ENCODE measurements at regions of chr9 and their contacts with region 1.

Region 1: GRCh38 chr9:114397848-114398605 is 10.2 kb upstream of the AKNA start:
- DNase-seq: peak; percentile 97
- H3K4me3 Mint-ChIP-seq: peak overlapping the region; percentile 95
- H3K27ac Mint-ChIP-seq: peak overlapping the region; percentile 90
- H3K4me1 Mint-ChIP-seq: peaks cover 44% of the 10 kb centered on the region
- H3K27me3 Mint-ChIP-seq: no peaks in the 10 kb centered on the region

Region 2: DNA sequence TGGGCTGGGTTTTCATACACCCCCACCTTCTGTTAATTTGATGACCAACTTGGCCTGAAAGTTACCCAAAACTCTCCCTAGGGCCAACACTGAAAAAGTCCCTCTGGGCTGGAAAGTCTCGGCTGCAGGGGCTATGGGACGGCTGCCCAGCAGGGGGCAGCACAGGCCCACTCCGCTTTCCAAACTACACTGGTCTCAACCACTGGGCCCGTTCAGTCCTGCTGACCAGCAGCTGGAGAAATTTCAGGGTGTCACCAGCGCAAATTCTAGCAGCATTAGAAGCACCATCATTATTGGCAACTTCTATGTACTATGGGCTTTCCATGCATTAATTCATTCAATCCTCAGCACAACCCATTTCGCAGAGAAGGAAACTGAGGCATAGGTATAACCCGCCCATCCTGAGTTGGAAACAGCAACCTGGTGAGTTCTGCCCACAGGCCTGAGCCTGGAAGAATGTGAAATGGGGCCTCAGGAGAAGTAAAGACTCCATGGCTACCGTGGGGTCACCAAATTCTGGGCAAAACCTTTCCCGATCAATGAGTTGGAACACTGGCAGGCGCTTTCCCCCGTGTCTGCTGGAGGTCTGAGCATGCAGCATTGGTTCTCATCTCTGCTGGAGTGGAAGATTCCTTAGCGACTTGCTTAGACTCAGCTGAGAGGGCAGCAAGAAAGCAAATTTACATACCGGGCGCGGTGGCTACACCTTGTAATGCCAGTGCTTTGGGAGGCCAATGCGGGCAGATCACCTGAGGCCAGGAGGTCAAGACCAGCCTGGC is 58.7 kb before region 1 on chr9:
- CTCF ChIA-PET with region 1: interaction called, 7 read pairs
- POLR2A ChIA-PET with region 1: no interaction called
- intact Hi-C with region 1: loop called (anchors 1 kb)
- DNase-seq: peak; percentile 71
- H3K4me3 Mint-ChIP-seq: no peak overlapping the region
- H3K27ac Mint-ChIP-seq: peak overlapping the region; percentile 64
- H3K4me1 Mint-ChIP-seq: peaks cover 3% of the 10 kb centered on the region
- H3K27me3 Mint-ChIP-seq: no peaks in the 10 kb centered on the region

Region 3: GRCh38 chr9:114348906-114349482 is 49.0 kb before region 1 on chr9:
- CTCF ChIA-PET with region 1: interaction called, 3 read pairs
- POLR2A ChIA-PET with region 1: no interaction called
- intact Hi-C with region 1: loop called (anchors 1 kb)
- DNase-seq: peak; percentile 97
- H3K4me3 Mint-ChIP-seq: peak overlapping the region; percentile 40
- H3K27ac Mint-ChIP-seq: peak overlapping the region; percentile 100
- H3K4me1 Mint-ChIP-seq: peaks cover 46% of the 10 kb centered on the region
- H3K27me3 Mint-ChIP-seq: no peaks in the 10 kb centered on the region

Region 4: GRCh38 chr9:114372921-114373448 is 25.0 kb before region 1 on chr9:
- CTCF ChIA-PET with region 1: interaction called, 3 read pairs
- POLR2A ChIA-PET with region 1: interaction called, 6 read pairs
- intact Hi-C with region 1: loop called (anchors 1 kb)
- DNase-seq: peak; percentile 92
- H3K4me3 Mint-ChIP-seq: peak overlapping the region; percentile 68
- H3K27ac Mint-ChIP-seq: peak overlapping the region; percentile 98
- H3K4me1 Mint-ChIP-seq: peaks cover 84% of the 10 kb centered on the region
- H3K27me3 Mint-ChIP-seq: no peaks in the 10 kb centered on the region

Region 5: GRCh38 chr9:114475412-114476135 is 77.5 kb after region 1 on chr9:
- CTCF ChIA-PET with region 1: no interaction called
- POLR2A ChIA-PET with region 1: no interaction called
- intact Hi-C with region 1: no loop called
- DNase-seq: no peak
- H3K4me3 Mint-ChIP-seq: no peak overlapping the region
- H3K27ac Mint-ChIP-seq: no peak overlapping the region
- H3K4me1 Mint-ChIP-seq: peaks cover 17% of the 10 kb centered on the region
- H3K27me3 Mint-ChIP-seq: no peaks in the 10 kb centered on the region